Naive thymus-derived CD8-positive, alpha-beta T cell (primary cell): ENCODE measurements at regions of chr6 and their contacts with region 1.

Region 1: GRCh38 chr6:20319520-20320357 is 81.9 kb upstream of the E2F3 start:
- DNase-seq: peak; percentile 60 to 92 (median 83)
- ATAC-seq: peak; percentile 90 to 92
- H3K4me3 Mint-ChIP-seq: peak overlapping the region; percentile 83 to 95 (median 92)
- H3K27ac Mint-ChIP-seq: peak overlapping the region; percentile 76 to 99 (median 98)
- H3K4me1 Mint-ChIP-seq: peaks cover 7 to 25% (median 18%) of the 10 kb centered on the region in 4 donors
- H3K27me3 Mint-ChIP-seq: no peaks in the 10 kb centered on the region

Region 2: GRCh38 chr6:20173833-20174792 is 145.6 kb before region 1 on chr6:
- POLR2A ChIA-PET with region 1: no interaction called
- DNase-seq: peak in 2 of 10 donors; percentile 3 to 8
- ATAC-seq: peak in 1 of 2 donors; percentile 50
- H3K4me3 Mint-ChIP-seq: peak overlapping the region in 9 of 10 donors; percentile 2 to 74 (median 39)
- H3K27ac Mint-ChIP-seq: peak overlapping the region in 6 of 10 donors; percentile 4 to 84 (median 52)
- H3K4me1 Mint-ChIP-seq: peaks cover 9 to 30% (median 19%) of the 10 kb centered on the region in 4 donors
- H3K27me3 Mint-ChIP-seq: peaks cover 0 to 3% (median 0%) of the 10 kb centered on the region in 5 donors

Region 3: GRCh38 chr6:20238688-20239587 is 80.8 kb before region 1 on chr6:
- POLR2A ChIA-PET with region 1: no interaction called
- DNase-seq: no peak
- ATAC-seq: no peak
- H3K4me3 Mint-ChIP-seq: no peak overlapping the region
- H3K27ac Mint-ChIP-seq: no peak overlapping the region
- H3K4me1 Mint-ChIP-seq: peaks cover 2 to 16% (median 8%) of the 10 kb centered on the region in 4 donors
- H3K27me3 Mint-ChIP-seq: no peaks in the 10 kb centered on the region

Region 4: DNA sequence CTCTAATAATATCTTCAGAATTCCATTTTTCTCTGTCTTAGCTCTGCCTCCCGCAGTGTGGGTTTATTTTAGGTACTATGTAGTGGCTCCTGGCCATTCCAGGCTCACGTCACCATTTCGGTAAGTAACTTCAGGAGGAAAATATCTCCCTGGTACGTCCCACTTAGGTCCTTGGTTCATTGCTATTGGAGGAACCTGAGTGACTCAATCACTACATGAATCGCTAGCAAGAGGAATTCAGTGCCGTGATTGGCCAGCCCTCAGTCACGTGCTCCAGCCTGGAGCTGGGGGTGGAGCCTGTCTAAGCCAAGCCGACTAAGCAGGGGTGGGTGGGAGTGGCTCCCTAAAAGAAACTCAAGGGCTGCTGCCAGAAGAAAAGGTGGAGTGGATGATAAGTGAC is 14.6 kb after region 1 on chr6:
- POLR2A ChIA-PET with region 1: interaction called, 28 read pairs
- DNase-seq: no peak
- ATAC-seq: no peak
- H3K4me3 Mint-ChIP-seq: no peak overlapping the region
- H3K27ac Mint-ChIP-seq: peak overlapping the region in 1 of 10 donors; percentile 12
- H3K4me1 Mint-ChIP-seq: peaks cover 17 to 32% (median 23%) of the 10 kb centered on the region in 4 donors
- H3K27me3 Mint-ChIP-seq: no peaks in the 10 kb centered on the region

Region 5: DNA sequence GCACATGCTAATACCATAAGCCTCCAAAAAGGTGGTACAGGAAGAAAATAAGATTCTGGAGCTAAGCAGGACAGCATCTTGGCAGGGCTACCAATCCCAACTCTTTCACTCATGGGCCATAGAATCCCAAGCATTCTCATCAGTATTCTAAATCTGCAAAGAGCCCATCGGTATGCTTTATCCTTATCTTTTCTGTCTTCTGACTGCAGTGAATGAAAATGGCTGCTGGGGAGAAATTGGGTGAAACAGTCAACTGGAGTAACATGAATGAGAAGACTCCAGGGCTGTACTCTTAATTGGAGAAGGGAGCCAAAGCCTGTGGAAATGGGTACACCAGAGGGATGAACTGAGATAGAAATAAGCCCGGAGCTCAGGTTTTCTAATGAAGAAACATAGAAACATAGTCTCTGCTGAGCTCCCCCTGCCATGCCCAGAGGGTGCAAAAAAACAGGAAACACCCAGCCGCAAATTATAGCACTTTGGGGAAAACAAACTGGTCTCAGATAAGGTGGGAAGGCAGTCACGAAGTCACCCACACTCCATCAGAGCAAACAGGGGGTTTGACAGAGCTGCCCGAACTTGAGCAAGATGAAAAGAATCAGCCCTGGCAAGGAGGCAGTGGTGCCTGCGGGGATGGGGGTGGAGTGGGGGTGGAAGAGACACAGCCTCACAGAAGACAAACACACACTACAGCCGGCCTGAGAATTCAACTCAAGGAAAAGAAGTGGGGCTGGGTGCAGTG is 46.5 kb after region 1 on chr6:
- POLR2A ChIA-PET with region 1: interaction called, 311 read pairs
- DNase-seq: peak; percentile 7 to 81 (median 42)
- ATAC-seq: peak; percentile 85 to 94
- H3K4me3 Mint-ChIP-seq: peak overlapping the region; percentile 64 to 90 (median 81)
- H3K27ac Mint-ChIP-seq: peak overlapping the region; percentile 86 to 99 (median 96)
- H3K4me1 Mint-ChIP-seq: peaks cover 34 to 66% (median 64%) of the 10 kb centered on the region in 4 donors
- H3K27me3 Mint-ChIP-seq: no peaks in the 10 kb centered on the region

Region 6: GRCh38 chr6:20389066-20389465 is 69.3 kb after region 1 on chr6:
- POLR2A ChIA-PET with region 1: interaction called, 10 read pairs
- DNase-seq: no peak
- ATAC-seq: no peak
- H3K4me3 Mint-ChIP-seq: no peak overlapping the region
- H3K27ac Mint-ChIP-seq: no peak overlapping the region
- H3K4me1 Mint-ChIP-seq: peaks cover 1 to 11% (median 6%) of the 10 kb centered on the region in 4 donors
- H3K27me3 Mint-ChIP-seq: no peaks in the 10 kb centered on the region

Region 7: DNA sequence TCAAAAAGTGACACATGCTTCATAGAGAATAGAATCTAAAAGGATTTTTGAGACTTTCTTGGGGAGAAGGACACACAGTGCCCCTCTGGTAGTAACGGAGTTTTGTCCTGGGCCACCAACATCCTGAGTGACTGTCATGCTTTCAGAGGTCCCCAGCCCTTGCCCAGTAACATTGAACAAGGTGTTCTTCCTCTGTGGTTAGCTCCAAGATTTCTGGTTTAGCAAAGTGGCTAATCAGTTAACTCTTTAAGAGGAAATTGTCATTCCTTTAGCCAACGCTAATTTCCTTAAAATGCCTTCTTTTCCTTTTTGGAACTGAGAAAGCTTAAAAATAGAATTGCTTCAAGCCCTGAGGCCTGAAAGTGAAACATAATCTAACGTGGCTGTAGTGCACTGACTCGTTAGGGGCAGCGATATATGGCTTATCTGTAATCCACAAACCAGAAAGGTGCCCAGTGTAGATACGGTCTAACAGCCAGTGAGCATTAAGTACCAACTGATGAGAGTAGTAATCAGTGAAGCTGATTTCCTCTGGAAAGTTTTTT is 89.8 kb after region 1 on chr6:
- POLR2A ChIA-PET with region 1: interaction called, 171 read pairs
- DNase-seq: no peak
- ATAC-seq: peak in 1 of 2 donors; percentile 14
- H3K4me3 Mint-ChIP-seq: peak overlapping the region in 8 of 10 donors; percentile 15 to 65 (median 28)
- H3K27ac Mint-ChIP-seq: peak overlapping the region in 6 of 10 donors; percentile 24 to 76 (median 65)
- H3K4me1 Mint-ChIP-seq: peaks cover 30 to 87% (median 62%) of the 10 kb centered on the region in 4 donors
- H3K27me3 Mint-ChIP-seq: no peaks in the 10 kb centered on the region

Region 8: GRCh38 chr6:20438462-20439070 is 118.8 kb after region 1 on chr6:
- POLR2A ChIA-PET with region 1: no interaction called
- DNase-seq: no peak
- ATAC-seq: no peak
- H3K4me3 Mint-ChIP-seq: no peak overlapping the region
- H3K27ac Mint-ChIP-seq: peak overlapping the region in 1 of 10 donors; percentile 49
- H3K4me1 Mint-ChIP-seq: peaks cover 9 to 11% (median 10%) of the 10 kb centered on the region in 4 donors
- H3K27me3 Mint-ChIP-seq: no peaks in the 10 kb centered on the region